ENCODE measurements at regions of chr16 and their contacts with region 1.

Region 1: DNA sequence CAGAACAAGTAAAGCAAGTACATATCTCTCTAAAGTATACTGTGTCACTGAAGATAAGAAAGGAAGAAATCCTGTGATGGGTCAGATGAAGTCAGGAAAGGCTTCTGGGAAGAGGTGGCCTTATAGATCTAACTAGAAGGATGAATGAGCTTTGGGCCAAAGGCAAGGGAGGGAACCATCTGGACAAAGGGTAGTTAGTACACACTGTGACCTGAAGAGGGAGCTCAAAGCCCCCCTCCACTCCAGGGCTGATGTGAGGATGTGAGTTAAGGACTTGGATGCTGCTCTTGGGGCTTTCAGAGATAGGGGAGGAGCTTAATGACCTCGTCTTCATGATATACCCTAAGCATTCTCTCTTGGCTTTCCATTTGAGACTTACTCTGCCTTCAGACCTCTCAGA is 185.3 kb upstream of the CACNG3 start:
- DNase-seq: peak; percentile 65
- CTCF ChIP-seq: peak; percentile 39

Region 2: DNA sequence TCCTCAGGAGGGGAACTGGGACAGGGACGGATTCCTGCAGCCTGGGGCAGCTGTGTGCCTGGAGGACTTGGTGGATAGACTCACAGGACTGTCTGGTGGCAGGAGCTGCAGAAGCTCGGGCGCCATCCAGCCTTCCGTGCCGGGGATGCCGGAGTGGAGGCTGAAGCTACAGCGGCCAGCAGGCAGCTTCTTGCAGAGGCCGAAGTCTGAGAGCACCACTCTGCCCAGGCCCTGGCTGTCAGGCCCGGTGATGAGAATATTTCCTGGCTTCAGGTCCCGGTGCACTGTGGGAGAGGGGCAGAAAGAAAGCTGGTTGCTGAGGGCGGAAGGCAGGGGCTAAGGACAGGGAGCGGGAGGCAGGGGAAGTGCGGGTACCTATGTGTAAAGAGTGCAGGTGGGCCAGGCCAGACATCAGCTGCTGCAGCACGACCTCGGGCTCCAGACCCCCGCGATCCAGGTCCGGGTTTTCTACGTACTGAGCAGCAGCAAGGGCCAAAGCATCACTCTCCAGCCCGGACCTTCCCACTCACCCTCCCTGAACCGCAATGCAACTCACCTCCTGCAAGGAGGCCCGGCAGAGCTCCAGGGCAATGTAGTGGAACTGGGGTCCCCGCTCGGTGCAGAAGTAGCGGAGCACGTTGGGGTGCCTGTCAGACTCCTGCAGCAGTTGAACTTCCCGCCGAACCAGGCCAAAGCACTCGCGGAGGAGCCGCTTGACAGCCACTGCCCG is 376.0 kb before region 1 on chr16:
- CTCF ChIA-PET with region 1: no interaction called
- POLR2A ChIA-PET with region 1: no interaction called
- DNase-seq: no peak
- CTCF ChIP-seq: no peak

Region 3: DNA sequence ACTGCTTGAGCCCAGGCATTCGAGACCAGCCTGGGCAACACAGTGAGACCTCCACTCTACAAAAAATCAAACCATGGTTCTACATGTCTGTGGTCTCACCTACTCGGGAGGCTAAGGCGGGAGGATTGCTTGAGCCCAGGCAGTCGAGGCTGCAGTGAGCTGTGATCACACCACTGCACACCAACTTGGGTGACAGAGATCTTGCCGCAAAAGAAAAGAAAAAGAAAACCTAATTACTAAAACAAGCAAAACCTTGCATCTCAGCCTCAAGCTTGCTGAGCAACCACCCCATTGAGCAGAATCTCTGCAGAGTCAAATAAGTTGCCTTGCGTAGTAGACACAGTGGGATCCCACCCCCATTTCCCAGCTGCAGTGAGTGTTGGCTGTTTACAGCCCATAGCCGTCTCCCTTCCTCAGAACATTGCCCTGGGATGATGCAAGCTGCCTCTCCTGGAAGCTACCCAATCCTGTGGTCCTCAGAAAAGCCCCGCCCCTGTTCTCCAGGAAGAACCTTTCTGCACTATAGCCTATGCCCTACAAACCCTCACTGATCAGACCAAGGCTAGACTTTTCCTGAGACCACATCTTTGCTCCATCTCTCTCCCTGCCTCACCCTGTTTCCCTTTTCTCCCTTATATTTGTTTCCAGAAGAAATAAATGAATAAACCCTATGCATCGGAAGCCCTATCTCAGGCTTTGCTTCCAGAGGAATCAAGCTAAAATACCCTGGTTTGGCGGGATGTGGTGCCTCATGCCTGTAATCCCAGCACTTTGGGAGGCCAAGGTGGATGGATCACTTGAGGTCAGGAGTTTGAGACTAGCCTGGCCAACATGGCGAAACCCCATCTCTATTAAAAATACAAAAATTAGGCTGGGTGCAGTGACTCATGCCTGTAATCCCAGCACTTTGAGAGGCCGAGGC is 341.1 kb before region 1 on chr16:
- CTCF ChIA-PET with region 1: no interaction called
- POLR2A ChIA-PET with region 1: no interaction called
- DNase-seq: no peak
- CTCF ChIP-seq: no peak

Region 4: GRCh38 chr16:24041826-24042631 is 28.8 kb before region 1 on chr16:
- CTCF ChIA-PET with region 1: interaction called, 24 read pairs
- POLR2A ChIA-PET with region 1: no interaction called
- DNase-seq: peak; percentile 82
- CTCF ChIP-seq: peak; percentile 65

Region 5: GRCh38 chr16:24054741-24055491 is 15.9 kb before region 1 on chr16:
- CTCF ChIA-PET with region 1: interaction called, 34 read pairs
- POLR2A ChIA-PET with region 1: no interaction called
- DNase-seq: no peak
- CTCF ChIP-seq: no peak

Region 6: GRCh38 chr16:24098896-24099295 is 28.0 kb after region 1 on chr16:
- CTCF ChIA-PET with region 1: interaction called, 12 read pairs
- POLR2A ChIA-PET with region 1: no interaction called
- DNase-seq: no peak
- CTCF ChIP-seq: no peak